Dendritic cell treated with granulocyte-macrophage colony-stimulating factor and Interleukin-4, amounts not matched to agents 40 ng/mL and 50 ng/mL, for 4 days (primary cell): ENCODE measurements at regions of chr13 and their contacts with region 1.

Region 1: DNA sequence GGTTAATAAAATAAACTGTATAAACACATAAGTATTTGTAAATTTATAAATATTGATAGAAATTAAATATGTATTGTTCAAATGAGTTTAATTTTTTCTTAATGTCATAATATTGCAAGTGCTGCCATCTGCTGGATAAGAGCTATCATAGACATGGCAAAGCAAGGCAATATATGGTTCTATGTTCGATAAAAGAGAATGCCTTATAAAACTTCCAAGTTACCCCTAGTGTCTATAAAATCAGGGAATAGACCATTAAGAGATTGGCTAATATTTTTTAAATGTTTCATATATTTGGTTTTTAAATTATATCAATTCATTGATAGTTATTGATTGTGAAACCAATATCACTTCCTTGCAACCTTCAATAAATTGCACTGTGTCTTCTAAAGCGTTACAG is 28.9 kb upstream of the SLITRK6 start:
- H3K4me3 Mint-ChIP-seq: no peak overlapping the region
- H3K27ac Mint-ChIP-seq: no peak overlapping the region
- H3K4me1 Mint-ChIP-seq: no peaks in the 10 kb centered on the region
- H3K27me3 Mint-ChIP-seq: no peaks in the 10 kb centered on the region

Region 2: DNA sequence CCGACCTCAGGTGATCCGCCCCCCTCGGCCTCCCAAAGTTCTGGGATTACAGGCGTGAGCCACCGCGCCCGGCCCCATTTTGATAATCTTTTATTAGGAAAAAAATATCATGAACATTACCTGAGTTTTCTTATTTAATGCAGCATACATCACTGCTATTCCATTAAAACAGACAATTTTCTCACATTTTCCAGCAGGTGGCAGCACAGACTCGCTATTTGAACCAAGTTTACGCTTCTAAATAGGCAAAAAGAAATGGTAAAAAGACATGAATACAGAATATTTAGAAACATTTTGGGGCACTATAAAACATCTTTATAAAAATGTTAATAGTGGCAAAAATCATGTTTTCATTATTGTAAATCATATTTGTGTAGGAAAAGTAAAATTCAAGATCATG is 932.0 kb before region 1 on chr13:
- intact Hi-C with region 1: loop called (anchors 5 kb)
- H3K4me3 Mint-ChIP-seq: no peak overlapping the region
- H3K27ac Mint-ChIP-seq: no peak overlapping the region
- H3K4me1 Mint-ChIP-seq: no peaks in the 10 kb centered on the region
- H3K27me3 Mint-ChIP-seq: no peaks in the 10 kb centered on the region

Region 3: DNA sequence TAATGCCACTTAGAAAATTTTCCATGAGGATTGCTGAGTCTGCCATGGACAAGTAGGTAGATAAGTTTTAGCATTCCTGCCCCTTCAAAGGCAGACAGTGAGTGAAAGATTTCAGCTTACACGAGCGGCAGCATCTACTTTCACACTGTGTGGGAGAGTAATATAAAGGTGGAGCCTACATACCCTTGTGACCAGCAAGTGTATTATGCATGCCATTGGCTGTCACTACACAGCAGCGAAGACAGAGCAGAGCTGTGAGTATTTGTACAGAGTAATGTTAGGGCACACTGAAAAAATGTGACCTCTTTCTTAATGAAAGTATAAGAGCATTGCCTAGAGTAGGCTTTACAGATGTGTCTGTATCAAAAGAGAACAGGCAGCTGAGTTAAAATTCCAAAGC is 42.9 kb before region 1 on chr13:
- intact Hi-C with region 1: no loop called
- H3K4me3 Mint-ChIP-seq: no peak overlapping the region
- H3K27ac Mint-ChIP-seq: no peak overlapping the region
- H3K4me1 Mint-ChIP-seq: no peaks in the 10 kb centered on the region
- H3K27me3 Mint-ChIP-seq: no peaks in the 10 kb centered on the region